Thyroid gland (tissue), 4 donors: ENCODE measurements at regions of chr11 and their contacts with region 1.

Region 1: GRCh38 chr11:74570266-74571061 is 21.9 kb upstream of the POLD3 start:
- DNase-seq: peak; percentile 56 to 57
- H3K4me3 ChIP-seq: no peak overlapping the region
- H3K27ac ChIP-seq: no peak overlapping the region
- H3K4me1 ChIP-seq: no peaks in the 10 kb centered on the region
- H3K27me3 ChIP-seq: no peaks in the 10 kb centered on the region
- CTCF ChIP-seq: peak; percentile 31 to 87 (median 76)
- POLR2A ChIP-seq: no peak

Region 2: GRCh38 chr11:74255741-74256369 is 314.6 kb before region 1 on chr11:
- intact Hi-C with region 1: loop called (anchors 10 kb)
- DNase-seq: peak; percentile 65 to 70
- H3K4me3 ChIP-seq: no peak overlapping the region
- H3K27ac ChIP-seq: no peak overlapping the region
- H3K4me1 ChIP-seq: peaks cover 16 to 31% of the 10 kb centered on the region in 2 donors
- H3K27me3 ChIP-seq: no peaks in the 10 kb centered on the region
- CTCF ChIP-seq: peak; percentile 83 to 92 (median 88)
- POLR2A ChIP-seq: no peak

Region 3: DNA sequence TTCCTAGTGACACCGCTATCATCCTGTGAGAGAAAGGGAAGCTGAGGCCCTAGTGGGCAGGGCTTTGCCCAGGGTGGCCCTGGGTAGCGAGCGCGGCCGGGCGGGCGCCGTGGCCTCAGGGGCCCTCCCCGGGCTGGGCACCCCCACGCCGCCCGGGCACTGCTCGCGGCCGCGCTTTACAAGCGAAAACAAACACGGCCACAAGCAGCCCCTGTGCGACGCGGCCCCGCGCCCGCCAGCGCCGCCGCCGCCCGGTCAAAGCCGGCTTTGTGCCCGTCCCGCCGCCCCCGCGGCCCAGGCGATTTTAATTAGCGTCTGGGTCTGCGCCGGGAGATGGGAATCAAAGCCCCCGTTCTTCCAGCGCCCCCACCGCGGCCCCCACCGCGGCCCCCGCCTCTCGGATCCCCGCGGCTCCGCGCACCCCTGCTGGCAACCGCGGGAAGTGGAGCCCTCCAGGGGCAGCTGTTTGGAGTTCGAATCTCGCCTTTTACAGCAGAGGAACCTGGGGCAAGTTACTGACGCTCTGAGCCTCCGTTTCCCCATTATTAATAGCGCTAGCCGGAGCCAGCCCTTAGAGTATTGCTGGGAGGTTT is 112.9 kb after region 1 on chr11:
- intact Hi-C with region 1: no loop called
- DNase-seq: peak; percentile 32 to 47
- H3K4me3 ChIP-seq: peak overlapping the region; percentile 10 to 32 (median 18)
- H3K27ac ChIP-seq: no peak overlapping the region
- H3K4me1 ChIP-seq: peaks cover 19 to 36% of the 10 kb centered on the region in 2 donors
- H3K27me3 ChIP-seq: no peaks in the 10 kb centered on the region
- CTCF ChIP-seq: peak in 3 of 6 experiments; percentile 21 to 57 (median 24)
- POLR2A ChIP-seq: no peak